Activated naive CD4-positive, alpha-beta T cell treated with anti-CD3 and anti-CD28 coated beads, Interleukin-2, amount 10 ng/mL, durations not matched to agents 7 days and 5 days (primary cell): ENCODE measurements at regions of chr1 and their contacts with region 1.

Region 1: GRCh38 chr1:156226116-156226538 is 13.3 kb downstream of the PMF1 start:
- DNase-seq: no peak
- H3K4me3 Mint-ChIP-seq: no peak overlapping the region
- H3K27ac Mint-ChIP-seq: peak overlapping the region; percentile 89
- H3K4me1 Mint-ChIP-seq: peaks cover 48% of the 10 kb centered on the region
- H3K27me3 Mint-ChIP-seq: no peaks in the 10 kb centered on the region

Region 2: DNA sequence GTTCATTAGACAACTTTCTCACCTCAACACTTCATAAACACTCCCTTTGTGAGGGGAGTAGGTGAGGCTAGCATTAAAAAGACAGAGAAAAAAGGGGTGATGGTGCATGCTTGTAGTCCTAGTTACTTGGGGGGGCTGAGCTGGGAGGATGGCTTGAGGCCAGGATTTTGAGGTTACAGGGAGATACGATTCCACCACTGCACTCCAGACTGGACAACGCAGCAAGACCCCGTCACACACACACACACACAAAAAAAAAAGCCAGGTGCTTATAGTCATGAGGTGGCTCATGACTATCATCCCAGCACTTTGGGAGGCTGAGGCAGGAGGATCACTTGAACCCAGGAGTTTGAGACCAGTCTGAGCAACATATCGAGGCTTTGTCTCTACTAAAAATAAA is 398.7 kb before region 1 on chr1:
- CTCF ChIA-PET with region 1: no interaction called
- DNase-seq: no peak
- H3K4me3 Mint-ChIP-seq: no peak overlapping the region
- H3K27ac Mint-ChIP-seq: no peak overlapping the region
- H3K4me1 Mint-ChIP-seq: peaks cover under 1% of the 10 kb centered on the region
- H3K27me3 Mint-ChIP-seq: no peaks in the 10 kb centered on the region

Region 3: DNA sequence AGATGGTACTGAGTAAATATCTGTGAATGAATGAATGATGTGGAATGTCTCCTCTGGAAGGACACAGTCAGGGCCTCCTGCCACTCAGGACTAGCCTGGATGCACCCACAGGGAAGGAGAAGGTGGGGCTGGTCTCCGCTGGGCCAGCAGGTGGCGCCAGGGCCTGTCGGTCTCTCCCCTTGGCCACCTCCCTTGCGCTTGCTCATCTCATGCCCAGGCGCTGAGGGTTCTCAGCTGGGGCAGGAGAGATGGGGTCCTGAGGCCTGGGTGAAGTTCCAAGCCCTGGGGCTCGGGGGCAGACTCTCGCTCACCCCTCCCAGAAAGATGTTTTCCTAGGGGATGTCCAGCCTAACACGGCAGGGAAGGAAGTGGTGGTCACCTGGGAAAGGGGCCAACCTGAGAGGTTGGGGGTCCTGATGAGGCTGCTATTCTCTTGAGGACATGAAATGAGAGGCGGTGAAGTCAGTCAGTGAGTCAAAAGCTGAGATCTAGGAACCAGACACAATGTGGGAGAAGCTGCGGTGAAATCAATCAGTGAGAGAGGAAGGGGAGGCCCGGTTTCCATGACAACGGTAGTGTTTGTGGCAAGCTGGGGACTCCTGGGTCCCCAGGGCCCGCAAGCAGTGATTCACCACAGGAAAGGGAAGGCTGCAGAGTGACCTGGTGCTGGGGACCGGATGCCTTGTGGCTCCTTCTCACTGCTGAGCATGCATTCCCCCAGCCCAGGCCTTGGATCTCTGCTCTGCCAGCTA is 129.3 kb before region 1 on chr1:
- CTCF ChIA-PET with region 1: interaction called, 18 read pairs
- DNase-seq: peak; percentile 87
- H3K4me3 Mint-ChIP-seq: peak overlapping the region; percentile 22
- H3K27ac Mint-ChIP-seq: peak overlapping the region; percentile 25
- H3K4me1 Mint-ChIP-seq: peaks cover 20% of the 10 kb centered on the region
- H3K27me3 Mint-ChIP-seq: peaks cover 88% of the 10 kb centered on the region

Region 4: GRCh38 chr1:156146020-156146768 is 79.9 kb before region 1 on chr1:
- CTCF ChIA-PET with region 1: interaction called, 315 read pairs
- DNase-seq: peak; percentile 59
- H3K4me3 Mint-ChIP-seq: peak overlapping the region; percentile 4
- H3K27ac Mint-ChIP-seq: peak overlapping the region; percentile 70
- H3K4me1 Mint-ChIP-seq: peaks cover 29% of the 10 kb centered on the region
- H3K27me3 Mint-ChIP-seq: no peaks in the 10 kb centered on the region

Region 5: GRCh38 chr1:156198831-156199349 is 27.2 kb before region 1 on chr1:
- CTCF ChIA-PET with region 1: interaction called, 21 read pairs
- DNase-seq: no peak
- H3K4me3 Mint-ChIP-seq: no peak overlapping the region
- H3K27ac Mint-ChIP-seq: peak overlapping the region; percentile 80
- H3K4me1 Mint-ChIP-seq: peaks cover 66% of the 10 kb centered on the region
- H3K27me3 Mint-ChIP-seq: no peaks in the 10 kb centered on the region

Region 6: GRCh38 chr1:156204686-156205085 is 21.4 kb before region 1 on chr1:
- CTCF ChIA-PET with region 1: interaction called, 16 read pairs
- DNase-seq: no peak
- H3K4me3 Mint-ChIP-seq: no peak overlapping the region
- H3K27ac Mint-ChIP-seq: no peak overlapping the region
- H3K4me1 Mint-ChIP-seq: peaks cover 10% of the 10 kb centered on the region
- H3K27me3 Mint-ChIP-seq: no peaks in the 10 kb centered on the region

Region 7: GRCh38 chr1:156212833-156213643 is 13.1 kb before region 1 on chr1 and contains the start of gene PMF1:
- CTCF ChIA-PET with region 1: interaction called, 44 read pairs
- DNase-seq: peak; percentile 99
- H3K4me3 Mint-ChIP-seq: peak within 1 kb of the TSS; percentile 86
- H3K27ac Mint-ChIP-seq: peak within 1 kb of the TSS; percentile 99
- H3K4me1 Mint-ChIP-seq: peaks cover 54% of the 10 kb centered on the region
- H3K27me3 Mint-ChIP-seq: no peaks in the 10 kb centered on the region

Region 8: GRCh38 chr1:156368889-156369684 is 143.0 kb after region 1 on chr1 and contains the start of gene RHBG:
- CTCF ChIA-PET with region 1: no interaction called
- DNase-seq: peak; percentile 40
- H3K4me3 Mint-ChIP-seq: peak within 1 kb of the TSS; percentile 55
- H3K27ac Mint-ChIP-seq: no peak within 1 kb of the TSS
- H3K4me1 Mint-ChIP-seq: peaks cover 3% of the 10 kb centered on the region
- H3K27me3 Mint-ChIP-seq: peaks cover 92% of the 10 kb centered on the region

Region 9: GRCh38 chr1:156414461-156415064 is 188.4 kb after region 1 on chr1:
- CTCF ChIA-PET with region 1: no interaction called
- DNase-seq: peak; percentile 65
- H3K4me3 Mint-ChIP-seq: no peak overlapping the region
- H3K27ac Mint-ChIP-seq: no peak overlapping the region
- H3K4me1 Mint-ChIP-seq: no peaks in the 10 kb centered on the region
- H3K27me3 Mint-ChIP-seq: peaks cover 92% of the 10 kb centered on the region